Common myeloid progenitor, CD34-positive (primary cell): ENCODE measurements at regions of chr11 and their contacts with region 1.

Region 1: DNA sequence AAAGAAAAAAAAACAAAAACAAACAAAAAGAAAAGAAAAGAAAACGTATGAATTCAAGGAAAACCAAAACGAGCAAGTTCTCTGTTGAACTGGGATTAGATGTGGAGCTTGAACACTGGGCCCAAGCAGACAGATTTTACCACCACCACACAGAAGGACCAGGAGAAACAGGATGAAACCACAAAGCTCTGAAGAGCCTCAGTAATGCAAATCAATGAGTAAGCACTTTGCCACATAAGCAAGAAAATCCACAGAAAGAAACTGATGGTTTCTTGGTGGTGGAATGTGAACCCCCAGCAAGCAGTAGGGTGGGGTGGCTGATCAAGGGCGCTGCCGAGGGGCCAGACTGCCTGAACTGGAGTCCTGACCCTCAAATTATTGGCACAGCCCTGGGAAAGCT is 50.9 kb upstream of the NFRKB start:
- DNase-seq: peak; percentile 25 to 67 (median 58)
- H3K4me3 ChIP-seq: peak overlapping the region in 1 of 7 experiments; percentile 3
- H3K27ac ChIP-seq: peak overlapping the region in 1 of 2 experiments; percentile 16
- H3K4me1 ChIP-seq: peaks cover 16 to 65% (median 48%) of the 10 kb centered on the region in 4 experiments
- H3K27me3 ChIP-seq: no peaks in the 10 kb centered on the region

Region 2: GRCh38 chr11:129922674-129923073 is 23.6 kb before region 1 on chr11:
- CTCF ChIA-PET with region 1: interaction called, 28 read pairs
- POLR2A ChIA-PET with region 1: no interaction called
- DNase-seq: peak in 2 of 3 donors; percentile 30 to 34
- H3K4me3 ChIP-seq: no peak overlapping the region
- H3K27ac ChIP-seq: no peak overlapping the region
- H3K4me1 ChIP-seq: peaks cover 3 to 29% (median 9%) of the 10 kb centered on the region in 4 experiments
- H3K27me3 ChIP-seq: no peaks in the 10 kb centered on the region

Region 3: DNA sequence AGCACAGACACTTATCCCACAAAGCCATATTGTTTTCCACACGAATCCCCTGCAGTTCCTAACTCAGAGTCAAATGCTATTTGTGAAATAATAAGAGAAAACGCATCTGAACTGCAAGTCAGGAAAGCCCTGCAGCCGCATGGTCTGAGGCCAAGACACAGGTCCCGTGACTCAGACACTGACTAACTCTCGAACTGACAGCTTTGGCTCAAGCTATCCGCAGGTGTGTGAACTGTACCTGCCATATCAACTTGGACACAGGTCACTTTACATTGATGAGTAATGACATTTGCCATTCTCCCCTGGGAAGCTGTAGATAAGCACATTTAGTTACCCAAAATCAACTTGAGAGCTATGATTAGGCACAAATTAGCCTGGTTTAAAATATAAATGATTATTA is 16.0 kb before region 1 on chr11:
- CTCF ChIA-PET with region 1: interaction called, 28 read pairs
- POLR2A ChIA-PET with region 1: no interaction called
- DNase-seq: peak in 1 of 3 donors; percentile 30
- H3K4me3 ChIP-seq: no peak overlapping the region
- H3K27ac ChIP-seq: no peak overlapping the region
- H3K4me1 ChIP-seq: peaks cover 0 to 9% (median 5%) of the 10 kb centered on the region in 4 experiments
- H3K27me3 ChIP-seq: no peaks in the 10 kb centered on the region

Region 4: GRCh38 chr11:130237282-130238006 is 291.2 kb after region 1 on chr11:
- CTCF ChIA-PET with region 1: no interaction called
- POLR2A ChIA-PET with region 1: no interaction called
- DNase-seq: no peak
- H3K4me3 ChIP-seq: no peak overlapping the region
- H3K27ac ChIP-seq: no peak overlapping the region
- H3K4me1 ChIP-seq: no peaks in the 10 kb centered on the region
- H3K27me3 ChIP-seq: no peaks in the 10 kb centered on the region